Endothelial cell of umbilical vein (primary cell): ENCODE measurements at regions of chr9 and their contacts with region 1.

Region 1: DNA sequence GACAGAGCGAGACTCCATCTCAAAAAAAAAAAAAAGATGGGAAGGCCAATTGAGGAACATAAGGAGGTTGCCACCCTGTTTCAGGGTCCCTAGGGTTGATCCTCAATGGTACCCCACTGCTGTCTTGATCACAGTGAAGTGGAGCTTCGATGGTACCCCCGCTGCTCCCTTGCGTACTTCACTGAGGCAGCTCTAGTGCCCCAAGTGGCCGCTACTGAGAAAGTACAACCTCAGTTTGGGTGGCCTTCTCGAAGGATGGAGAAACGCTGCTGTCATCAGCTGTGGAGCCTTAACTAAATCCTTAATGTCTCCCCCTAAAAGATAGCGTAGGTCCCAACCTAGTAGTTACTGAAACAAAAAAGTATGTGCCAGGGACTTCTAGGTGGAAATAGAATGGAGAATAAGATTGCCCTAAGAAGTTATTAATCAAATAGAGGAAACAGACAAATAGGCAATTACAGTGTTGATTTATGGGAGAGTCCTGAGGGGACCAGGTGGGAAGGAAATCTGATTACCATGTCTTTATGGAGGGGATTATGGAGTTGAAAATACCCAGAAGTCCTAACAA is 6.3 kb downstream of the TESK1 start:
- DNase-seq: peak; percentile 37
- H3K4me3 ChIP-seq: no peak overlapping the region
- H3K27ac ChIP-seq: no peak overlapping the region
- H3K4me1 ChIP-seq: no peaks in the 10 kb centered on the region
- H3K27me3 ChIP-seq: peaks cover 17 to 21% of the 10 kb centered on the region in 2 experiments
- CTCF ChIP-seq: peak; percentile 67 to 80
- POLR2A ChIP-seq: no peak

Region 2: GRCh38 chr9:35628389-35628991 is 17.2 kb after region 1 on chr9:
- CTCF ChIA-PET with region 1: interaction called, 36 read pairs
- POLR2A ChIA-PET with region 1: no interaction called
- dilution Hi-C with region 1: no loop called
- intact Hi-C with region 1: no loop called
- DNase-seq: no peak
- H3K4me3 ChIP-seq: no peak overlapping the region
- H3K27ac ChIP-seq: no peak overlapping the region
- H3K4me1 ChIP-seq: no peaks in the 10 kb centered on the region
- H3K27me3 ChIP-seq: peaks cover 0 to 5% of the 10 kb centered on the region in 2 experiments
- CTCF ChIP-seq: no peak
- POLR2A ChIP-seq: no peak